IMR-90 (cell line): ENCODE measurements at regions of chr17 and their contacts with region 1.

Region 1: DNA sequence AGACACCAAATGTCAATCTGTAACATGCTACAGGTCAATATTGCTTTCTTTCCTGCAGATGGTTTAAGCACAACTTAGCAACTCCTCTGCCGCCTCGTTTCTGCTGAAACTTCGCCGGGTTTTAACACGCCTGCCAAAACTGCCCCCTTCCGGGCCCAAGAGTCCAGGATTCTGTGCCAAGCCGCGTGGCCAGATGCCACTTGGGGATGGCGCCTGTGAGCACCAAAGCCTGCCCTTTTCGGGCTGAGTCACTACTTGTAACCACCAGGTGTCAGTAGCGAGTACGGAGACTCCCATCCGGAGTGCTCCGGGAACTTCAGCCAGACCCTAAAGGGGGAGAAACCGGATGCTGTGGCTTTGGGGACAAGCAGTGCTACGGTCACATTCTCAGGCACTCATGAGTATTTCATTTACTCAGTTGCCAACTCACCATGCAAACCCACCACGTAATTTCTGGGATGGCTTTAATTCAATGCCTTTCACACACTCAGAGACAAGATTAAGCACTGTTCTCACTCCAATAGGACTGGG is 7.8 kb downstream of the PMP22 start:
- DNase-seq: peak; percentile 72
- ATAC-seq: peak; percentile 37
- H3K4me3 ChIP-seq: no peak overlapping the region
- H3K27ac ChIP-seq: no peak overlapping the region
- H3K4me1 ChIP-seq: peaks cover 13% of the 10 kb centered on the region
- H3K27me3 ChIP-seq: no peaks in the 10 kb centered on the region
- CTCF ChIP-seq: peak; percentile 84
- POLR2A ChIP-seq: no peak
- RAD21 ChIP-seq: peak; percentile 71

Region 2: DNA sequence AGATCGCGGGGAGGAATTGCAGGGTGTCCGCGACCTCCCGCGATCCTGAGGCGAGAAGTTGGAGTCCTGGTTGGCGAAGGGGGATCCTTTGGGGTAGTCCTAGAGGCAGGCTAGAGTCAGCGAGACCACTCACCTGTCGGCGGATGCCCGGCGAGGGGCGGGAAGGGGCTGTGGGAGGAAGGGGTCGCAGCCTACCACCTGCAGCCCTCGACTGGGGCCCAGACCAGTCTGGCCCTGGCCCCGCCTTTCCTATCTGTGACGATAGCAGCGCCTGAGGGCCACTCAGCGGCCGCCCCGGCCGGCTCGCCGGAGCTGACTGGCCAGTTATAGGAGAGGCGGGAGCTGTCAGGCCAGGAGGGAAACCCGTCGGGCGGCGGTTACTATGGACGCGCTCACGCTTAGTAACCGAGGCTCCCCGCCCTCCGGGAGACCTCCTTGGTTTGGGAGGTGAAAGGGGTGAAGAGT is 84.1 kb after region 1 on chr17 and contains the start of gene TEKT3:
- CTCF ChIA-PET with region 1: no interaction called
- POLR2A ChIA-PET with region 1: no interaction called
- dilution Hi-C with region 1: no loop called
- in situ Hi-C with region 1: no loop called
- intact Hi-C with region 1: loop called (anchors 10 kb)
- DNase-seq: peak; percentile 55
- ATAC-seq: peak; percentile 99
- H3K4me3 ChIP-seq: peak within 1 kb of the TSS; percentile 37
- H3K27ac ChIP-seq: no peak within 1 kb of the TSS
- H3K4me1 ChIP-seq: no peaks in the 10 kb centered on the region
- H3K27me3 ChIP-seq: peaks cover 13% of the 10 kb centered on the region
- CTCF ChIP-seq: no peak
- POLR2A ChIP-seq: no peak
- RAD21 ChIP-seq: no peak
- total RNA-seq, gene TEKT3: not detected in 2 replicates

Region 3: DNA sequence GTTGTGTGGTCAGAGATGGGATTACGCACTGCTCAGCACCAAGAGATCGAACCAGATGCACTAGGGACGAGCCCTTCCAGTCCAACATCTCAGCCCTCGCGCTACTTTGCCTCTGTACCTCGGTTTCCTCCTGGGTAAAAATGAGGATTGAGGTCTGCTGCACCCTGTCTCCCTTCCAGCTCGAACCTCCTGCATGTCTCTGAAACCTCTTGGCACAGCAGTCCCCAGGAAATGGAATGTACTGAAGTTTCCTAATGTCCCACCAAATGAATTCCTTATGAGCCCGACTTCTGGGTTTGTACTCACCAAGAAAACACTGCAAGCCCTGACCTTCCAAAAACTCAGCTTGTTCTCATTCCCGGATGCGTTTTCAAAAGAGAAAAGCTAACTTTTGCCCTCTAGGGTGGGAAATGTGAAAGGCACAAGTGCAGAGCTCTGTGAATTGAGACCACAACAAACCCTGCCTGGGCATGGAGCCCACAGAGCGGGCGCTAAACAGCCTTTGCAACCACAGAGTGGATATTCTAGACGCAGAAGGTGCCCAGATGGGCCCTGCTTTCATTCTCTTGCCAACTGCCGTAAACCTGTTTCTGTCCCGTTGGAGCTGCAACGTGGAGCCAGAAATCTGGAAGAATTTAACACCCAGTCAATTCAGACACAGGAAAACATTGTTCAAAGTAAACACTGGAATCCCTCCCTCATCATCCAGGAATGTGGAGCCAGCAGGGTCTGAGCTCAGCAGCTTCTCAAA is 199.8 kb after region 1 on chr17:
- CTCF ChIA-PET with region 1: interaction called, 3 read pairs
- POLR2A ChIA-PET with region 1: interaction called, 4 read pairs
- dilution Hi-C with region 1: no loop called
- in situ Hi-C with region 1: no loop called
- intact Hi-C with region 1: loop called (anchors 1 kb)
- DNase-seq: peak; percentile 84
- ATAC-seq: peak; percentile 76
- H3K4me3 ChIP-seq: no peak overlapping the region
- H3K27ac ChIP-seq: peak overlapping the region; percentile 66
- H3K4me1 ChIP-seq: peaks cover 22% of the 10 kb centered on the region
- H3K27me3 ChIP-seq: no peaks in the 10 kb centered on the region
- CTCF ChIP-seq: peak; percentile 51
- POLR2A ChIP-seq: no peak
- RAD21 ChIP-seq: peak; percentile 54

Region 4: DNA sequence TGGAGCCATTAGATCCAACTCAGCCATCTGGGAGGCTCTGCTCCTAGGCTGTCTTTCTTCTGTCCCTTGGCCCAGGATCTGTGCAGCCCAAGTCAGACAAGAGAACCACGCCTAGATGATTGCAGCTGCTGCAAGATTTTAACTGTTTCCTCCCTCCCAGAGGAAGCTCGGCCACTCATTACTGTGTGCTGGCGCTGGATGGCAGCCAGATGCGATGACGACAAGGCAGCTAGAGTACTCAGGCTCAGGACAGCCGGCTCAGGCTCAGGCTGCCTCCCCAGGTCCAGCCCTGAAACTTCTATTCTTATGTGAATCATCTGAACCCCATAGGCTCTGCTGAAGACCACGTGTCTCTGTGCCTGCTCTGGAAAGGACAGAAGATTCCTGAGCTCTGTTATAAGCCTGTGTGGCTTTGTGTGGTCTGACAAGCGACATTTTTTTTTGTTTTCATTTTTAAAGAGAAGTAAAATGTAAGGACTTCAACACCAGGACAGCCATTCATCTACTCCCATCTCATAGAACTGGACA is 394.3 kb after region 1 on chr17:
- CTCF ChIA-PET with region 1: no interaction called
- POLR2A ChIA-PET with region 1: no interaction called
- dilution Hi-C with region 1: no loop called
- in situ Hi-C with region 1: loop called (anchors 25 kb)
- intact Hi-C with region 1: loop called (anchors 5 kb)
- DNase-seq: peak; percentile 99
- ATAC-seq: peak; percentile 95
- H3K4me3 ChIP-seq: peak overlapping the region; percentile 71
- H3K27ac ChIP-seq: peak overlapping the region; percentile 83
- H3K4me1 ChIP-seq: peaks cover 14% of the 10 kb centered on the region
- H3K27me3 ChIP-seq: no peaks in the 10 kb centered on the region
- CTCF ChIP-seq: no peak
- POLR2A ChIP-seq: peak; percentile 68; the same call in 1 of the 2 replicates
- RAD21 ChIP-seq: peak; percentile 36

Region 5: GRCh38 chr17:15999439-16000350 is 742.4 kb after region 1 on chr17 and contains the starts of genes TTC19 and ZSWIM7:
- CTCF ChIA-PET with region 1: no interaction called
- POLR2A ChIA-PET with region 1: no interaction called
- dilution Hi-C with region 1: no loop called
- in situ Hi-C with region 1: no loop called
- intact Hi-C with region 1: loop called (anchors 2 kb)
- DNase-seq: peak; percentile 94
- ATAC-seq: peak; percentile 95
- H3K4me3 ChIP-seq: peak within 1 kb of the TSS; percentile 72
- H3K27ac ChIP-seq: peak within 1 kb of the TSS; percentile 96
- H3K4me1 ChIP-seq: peaks cover 6% of the 10 kb centered on the region; the same call in 1 of the 2 replicates
- H3K27me3 ChIP-seq: no peaks in the 10 kb centered on the region
- CTCF ChIP-seq: no peak
- POLR2A ChIP-seq: peak; percentile 99
- RAD21 ChIP-seq: no peak
- total RNA-seq, gene TTC19: 12.9 and 19.2 TPM in 2 replicates
- total RNA-seq, gene ZSWIM7: 6.8 and 7.2 TPM in 2 replicates